HCT116 (cell line): ENCODE measurements at regions of chr3 and their contacts with region 1.

Region 1: GRCh38 chr3:184874709-184875644 is 63.0 kb downstream of the VPS8 start:
- DNase-seq: peak; percentile 8
- ATAC-seq: peak; percentile 62
- H3K4me3 ChIP-seq: no peak overlapping the region
- H3K27ac ChIP-seq: no peak overlapping the region
- H3K4me1 ChIP-seq: no peaks in the 10 kb centered on the region
- H3K27me3 ChIP-seq: no peaks in the 10 kb centered on the region
- CTCF ChIP-seq: peak; percentile 53 to 73 (median 69)
- POLR2A ChIP-seq: no peak
- RAD21 ChIP-seq: peak; percentile 81

Region 2: DNA sequence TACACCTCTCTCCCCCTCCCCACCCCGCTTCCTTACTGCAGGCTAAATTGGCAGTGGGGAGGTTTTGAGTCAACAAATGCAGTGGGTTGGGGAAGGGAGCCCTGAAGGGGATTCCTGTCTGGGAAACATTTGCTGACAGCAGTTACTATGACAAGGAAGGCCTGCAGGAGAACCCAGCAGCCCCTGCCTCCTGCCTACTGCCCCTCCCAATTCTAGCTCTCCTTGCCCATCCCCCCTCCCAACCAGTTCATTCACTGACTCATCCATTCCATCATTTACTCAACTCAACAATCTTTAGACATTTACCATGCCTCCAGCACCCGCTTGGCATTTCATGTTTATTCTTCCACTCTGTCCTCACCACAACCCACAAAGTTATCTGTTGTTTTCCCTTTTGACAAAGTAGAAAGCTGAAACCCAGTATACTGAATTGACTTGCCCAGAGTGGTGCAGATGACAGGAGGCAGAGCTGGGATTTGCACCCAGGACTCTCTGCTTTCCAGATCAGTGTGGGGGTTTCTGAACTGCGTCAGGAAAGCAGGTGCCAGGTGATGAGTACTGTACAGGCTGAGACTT is 238.1 kb before region 1 on chr3:
- CTCF ChIA-PET with region 1: no interaction called
- POLR2A ChIA-PET with region 1: no interaction called
- RAD21 ChIA-PET with region 1: no interaction called
- intact Hi-C with region 1: no loop called
- DNase-seq: no peak
- ATAC-seq: no peak
- H3K4me3 ChIP-seq: no peak overlapping the region
- H3K27ac ChIP-seq: no peak overlapping the region
- H3K4me1 ChIP-seq: peaks cover 3 to 12% of the 10 kb centered on the region in 2 experiments; a peak in 3 of 4 replicates
- H3K27me3 ChIP-seq: no peaks in the 10 kb centered on the region
- CTCF ChIP-seq: no peak
- POLR2A ChIP-seq: no peak
- RAD21 ChIP-seq: no peak

Region 3: GRCh38 chr3:185176750-185177359 is 301.9 kb after region 1 on chr3:
- CTCF ChIA-PET with region 1: interaction called, 8 read pairs
- POLR2A ChIA-PET with region 1: no interaction called
- RAD21 ChIA-PET with region 1: no interaction called
- intact Hi-C with region 1: loop called (anchors 1 kb)
- DNase-seq: peak; percentile 8
- ATAC-seq: peak; percentile 70
- H3K4me3 ChIP-seq: no peak overlapping the region
- H3K27ac ChIP-seq: no peak overlapping the region
- H3K4me1 ChIP-seq: no peaks in the 10 kb centered on the region
- H3K27me3 ChIP-seq: no peaks in the 10 kb centered on the region
- CTCF ChIP-seq: peak; percentile 58 to 79 (median 74); a peak in 5 of 6 replicates
- POLR2A ChIP-seq: no peak
- RAD21 ChIP-seq: peak; percentile 74

Region 4: GRCh38 chr3:185215873-185216606 is 341.1 kb after region 1 on chr3:
- CTCF ChIA-PET with region 1: interaction called, 7 read pairs
- POLR2A ChIA-PET with region 1: no interaction called
- RAD21 ChIA-PET with region 1: no interaction called
- intact Hi-C with region 1: loop called (anchors 2 kb)
- DNase-seq: no peak
- ATAC-seq: no peak
- H3K4me3 ChIP-seq: no peak overlapping the region
- H3K27ac ChIP-seq: no peak overlapping the region
- H3K4me1 ChIP-seq: no peaks in the 10 kb centered on the region
- H3K27me3 ChIP-seq: no peaks in the 10 kb centered on the region
- CTCF ChIP-seq: peak; percentile 46 to 66 (median 47); a peak in 5 of 6 replicates
- POLR2A ChIP-seq: no peak
- RAD21 ChIP-seq: peak; percentile 74

Region 5: DNA sequence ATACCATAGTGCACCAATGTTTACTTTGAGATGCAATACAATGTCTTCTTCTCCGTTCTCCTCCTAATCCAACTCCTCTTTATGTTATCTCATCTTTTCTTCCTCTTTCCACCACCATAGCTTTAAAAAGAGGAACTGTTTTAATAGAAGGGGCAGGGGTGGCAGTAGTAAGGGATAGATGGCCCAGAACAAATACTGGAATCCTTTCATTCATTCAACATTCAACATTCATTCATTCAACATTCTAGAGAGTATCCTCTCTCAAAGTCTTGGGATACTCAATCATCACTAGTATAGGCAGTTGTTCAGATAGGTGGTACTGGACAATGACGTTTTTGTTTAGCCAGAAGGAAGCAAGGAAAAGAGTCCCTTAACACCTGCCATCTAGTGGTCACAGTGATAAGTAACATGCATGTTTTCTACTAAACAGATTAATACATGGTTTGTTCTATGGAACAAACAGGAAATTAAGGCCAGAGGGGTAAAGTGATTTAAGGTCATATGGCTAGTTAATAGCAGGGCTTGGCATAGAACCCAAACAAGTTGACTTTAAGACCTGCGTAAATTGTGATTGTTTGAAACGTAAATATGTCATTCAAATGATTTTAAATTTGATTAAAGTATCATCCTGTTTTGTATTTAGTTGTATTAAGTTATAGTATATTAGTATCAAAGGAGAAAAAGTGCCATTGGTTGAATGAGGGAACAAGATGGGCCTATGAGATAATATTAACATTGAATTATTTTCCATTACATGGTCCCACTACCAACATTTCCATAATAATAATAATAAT is 405.8 kb after region 1 on chr3:
- CTCF ChIA-PET with region 1: no interaction called
- POLR2A ChIA-PET with region 1: no interaction called
- RAD21 ChIA-PET with region 1: no interaction called
- intact Hi-C with region 1: loop called (anchors 2 kb)
- DNase-seq: peak; percentile 75
- ATAC-seq: peak; percentile 65
- H3K4me3 ChIP-seq: no peak overlapping the region
- H3K27ac ChIP-seq: no peak overlapping the region
- H3K4me1 ChIP-seq: peaks cover 6 to 21% of the 10 kb centered on the region in 2 experiments; a peak in 3 of 4 replicates
- H3K27me3 ChIP-seq: no peaks in the 10 kb centered on the region
- CTCF ChIP-seq: peak; percentile 57 to 79 (median 68); a peak in 5 of 6 replicates
- POLR2A ChIP-seq: no peak
- RAD21 ChIP-seq: peak; percentile 42

Region 6: DNA sequence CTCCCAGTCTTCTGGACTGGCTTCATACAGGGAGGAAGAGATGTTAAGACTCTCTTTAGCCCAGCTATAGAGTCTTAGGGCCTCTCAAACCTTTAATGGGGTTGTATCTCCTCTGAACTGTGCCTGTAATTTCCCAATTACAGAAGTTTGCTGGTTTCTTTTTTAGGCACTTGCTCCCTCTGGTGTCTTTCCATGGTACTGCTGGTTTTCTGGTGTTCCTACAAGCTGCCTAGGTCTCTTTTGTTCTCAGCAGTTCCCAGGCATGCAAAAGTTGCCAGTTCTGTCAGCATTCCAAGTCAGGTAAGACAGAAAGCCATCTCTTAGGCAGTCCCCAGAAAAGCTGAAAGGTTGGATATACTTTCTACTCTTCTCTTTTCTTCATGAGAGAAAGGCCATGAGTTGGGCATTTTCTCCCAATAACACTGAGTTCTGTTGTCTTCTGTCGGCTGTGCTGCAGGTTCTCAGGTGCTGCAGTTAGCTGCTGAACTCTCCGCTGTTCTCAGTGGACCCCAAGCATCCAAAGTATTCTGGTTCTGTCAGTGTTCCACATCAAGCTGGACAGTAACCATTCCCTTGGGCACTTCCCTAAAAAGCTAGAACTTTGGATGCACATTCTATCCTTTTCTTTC is 433.3 kb after region 1 on chr3:
- CTCF ChIA-PET with region 1: interaction called, 10 read pairs
- POLR2A ChIA-PET with region 1: no interaction called
- RAD21 ChIA-PET with region 1: no interaction called
- intact Hi-C with region 1: loop called (anchors 1 kb)
- DNase-seq: peak; percentile 51
- ATAC-seq: peak; percentile 81
- H3K4me3 ChIP-seq: no peak overlapping the region
- H3K27ac ChIP-seq: no peak overlapping the region
- H3K4me1 ChIP-seq: no peaks in the 10 kb centered on the region
- H3K27me3 ChIP-seq: no peaks in the 10 kb centered on the region
- CTCF ChIP-seq: peak; percentile 49 to 81 (median 74); a peak in 5 of 6 replicates
- POLR2A ChIP-seq: no peak
- RAD21 ChIP-seq: peak; percentile 70